ENCODE measurements at regions of chr2 and their contacts with region 1.

Region 1: DNA sequence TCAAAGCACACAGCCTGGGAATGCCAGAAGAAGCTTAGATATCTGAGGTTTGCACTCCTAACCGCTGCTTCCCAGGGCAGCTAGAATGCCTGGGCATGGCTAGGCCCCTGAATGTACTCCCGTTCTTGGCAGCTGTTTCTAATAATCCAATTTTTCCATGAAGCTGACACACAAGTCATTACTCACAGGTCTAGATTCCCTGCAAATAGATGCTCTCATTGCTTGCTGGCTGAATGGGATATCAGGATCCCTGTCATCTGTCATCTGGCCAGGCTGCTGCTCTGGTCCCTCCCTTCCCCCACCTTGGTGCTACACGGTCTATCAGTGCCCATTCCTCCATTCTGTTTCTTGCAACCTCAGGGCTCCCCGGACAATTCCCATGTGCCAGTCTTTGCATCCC is 40.7 kb upstream of the TEX51 start:
- DNase-seq: no peak
- H3K4me3 ChIP-seq: no peak overlapping the region
- H3K27ac ChIP-seq: no peak overlapping the region
- H3K4me1 ChIP-seq: no peaks in the 10 kb centered on the region
- H3K27me3 ChIP-seq: no peaks in the 10 kb centered on the region
- CTCF ChIP-seq: no peak

Region 2: GRCh38 chr2:126902152-126902835 is 44.3 kb after region 1 on chr2:
- CTCF ChIA-PET with region 1: no interaction called
- dilution Hi-C with region 1: loop called (anchors 5 kb)
- in situ Hi-C with region 1: no loop called
- intact Hi-C with region 1: no loop called
- DNase-seq: no peak
- H3K4me3 ChIP-seq: no peak overlapping the region
- H3K27ac ChIP-seq: no peak overlapping the region
- H3K4me1 ChIP-seq: no peaks in the 10 kb centered on the region
- H3K27me3 ChIP-seq: no peaks in the 10 kb centered on the region
- CTCF ChIP-seq: no peak